CD8-positive, alpha-beta T cell (primary cell): ENCODE measurements at regions of chr18 and their contacts with region 1.

Region 1: GRCh38 chr18:62714671-62715435 is 488 bp upstream of the PHLPP1 start:
- DNase-seq: peak; percentile 78 to 97 (median 92)
- ATAC-seq: peak; percentile 71
- H3K4me3 ChIP-seq: peak overlapping the region; percentile 64 to 71
- H3K4me3 Mint-ChIP-seq: peak overlapping the region; percentile 97
- H3K27ac ChIP-seq: peak overlapping the region; percentile 80 to 89
- H3K27ac Mint-ChIP-seq: peak overlapping the region; percentile 99
- H3K4me1 ChIP-seq: peaks cover 15% of the 10 kb centered on the region
- H3K4me1 Mint-ChIP-seq: peaks cover 37% of the 10 kb centered on the region
- H3K27me3 ChIP-seq: no peaks in the 10 kb centered on the region
- H3K27me3 Mint-ChIP-seq: no peaks in the 10 kb centered on the region
- CTCF ChIP-seq: peak; percentile 77

Region 2: DNA sequence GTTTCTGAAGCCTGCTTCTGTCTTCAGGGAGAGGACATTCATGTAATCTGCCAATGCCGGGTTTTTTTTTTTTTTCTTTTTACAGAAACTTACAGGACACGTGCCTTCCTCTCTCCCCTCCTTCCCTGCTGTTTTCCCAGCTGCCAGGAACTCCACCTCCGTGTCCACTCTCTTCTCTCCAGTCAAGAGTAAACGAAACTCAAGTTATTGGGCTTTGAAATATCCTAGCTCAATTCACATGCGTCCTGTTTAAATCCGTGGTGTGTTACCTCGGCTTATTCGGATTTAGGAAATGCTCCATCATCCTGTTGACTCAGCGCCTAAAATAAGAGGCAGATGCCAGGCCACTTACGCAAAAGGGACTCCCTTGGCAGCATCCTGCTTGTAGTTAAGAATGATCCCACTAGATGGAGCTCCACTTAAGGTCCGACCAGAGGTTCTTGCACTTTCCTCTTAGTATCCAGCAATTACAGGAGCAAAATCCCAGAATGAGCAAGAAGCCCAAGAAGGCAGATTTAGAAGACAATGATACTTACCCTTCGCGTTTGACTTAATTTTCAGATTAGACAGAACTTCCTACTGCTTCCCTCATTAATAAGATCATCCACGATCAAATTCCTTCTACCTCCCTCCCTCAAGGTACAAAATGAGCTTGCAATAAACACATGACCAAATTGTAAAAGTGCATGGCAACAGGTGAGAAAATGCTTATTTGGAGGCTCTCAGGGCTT is 289.2 kb before region 1 on chr18:
- CTCF ChIA-PET with region 1: no interaction called
- POLR2A ChIA-PET with region 1: no interaction called
- intact Hi-C with region 1: loop called in 1 of 2 experiments (anchors 2 kb)
- DNase-seq: peak; percentile 3 to 82 (median 46)
- ATAC-seq: peak; percentile 45
- H3K4me3 ChIP-seq: no peak overlapping the region
- H3K4me3 Mint-ChIP-seq: no peak overlapping the region
- H3K27ac ChIP-seq: no peak overlapping the region
- H3K27ac Mint-ChIP-seq: no peak overlapping the region
- H3K4me1 ChIP-seq: peaks cover 5% of the 10 kb centered on the region
- H3K4me1 Mint-ChIP-seq: peaks cover 17% of the 10 kb centered on the region
- H3K27me3 ChIP-seq: no peaks in the 10 kb centered on the region
- H3K27me3 Mint-ChIP-seq: no peaks in the 10 kb centered on the region
- CTCF ChIP-seq: peak; percentile 87

Region 3: DNA sequence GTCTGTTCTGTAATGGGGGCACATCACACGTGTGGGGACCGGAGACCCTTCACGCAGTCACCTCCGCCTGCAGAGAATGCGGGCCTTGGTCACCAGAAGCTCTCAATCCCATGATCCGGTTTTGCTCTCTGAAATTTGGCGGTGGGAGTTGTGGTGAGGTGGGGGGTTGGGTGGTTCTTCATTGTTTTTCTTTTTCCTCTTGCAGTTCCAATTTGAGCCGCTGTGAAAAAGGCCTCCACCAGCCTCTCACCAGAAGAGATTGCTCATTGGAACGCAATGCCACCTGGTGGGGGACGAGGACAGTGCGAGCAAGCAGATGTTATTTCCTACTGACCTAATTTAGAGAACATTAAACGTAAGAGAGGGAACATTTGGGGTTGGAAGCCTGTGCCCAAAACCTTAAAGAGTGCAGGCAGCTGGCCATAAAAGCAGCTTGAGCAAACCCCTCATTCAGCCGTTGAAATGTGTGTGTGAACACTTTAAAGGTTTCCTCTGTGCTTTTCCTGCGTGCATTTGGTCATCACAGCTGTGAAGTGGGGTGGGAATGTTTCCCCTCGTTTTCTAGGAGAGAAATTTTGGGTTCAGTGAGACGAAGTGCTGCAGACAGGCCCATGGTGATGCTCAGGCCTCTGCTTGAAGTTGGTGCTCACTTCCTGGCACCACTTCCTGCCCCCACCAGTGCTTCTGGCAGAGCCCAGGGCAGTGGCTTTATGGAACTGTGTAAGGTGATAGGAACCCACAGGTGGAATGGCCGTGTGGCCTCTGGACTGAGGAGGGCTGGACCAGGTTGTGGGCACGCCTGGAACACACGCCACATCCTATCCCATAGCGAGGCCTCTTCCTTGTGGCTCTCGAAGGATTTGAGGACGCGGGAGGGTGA is 130.4 kb before region 1 on chr18:
- CTCF ChIA-PET with region 1: interaction called, 4 read pairs
- POLR2A ChIA-PET with region 1: no interaction called
- intact Hi-C with region 1: loop called (anchors 5 kb)
- DNase-seq: peak; percentile 62 to 91 (median 83)
- ATAC-seq: peak; percentile 99
- H3K4me3 ChIP-seq: no peak overlapping the region
- H3K4me3 Mint-ChIP-seq: peak overlapping the region; percentile 33
- H3K27ac ChIP-seq: peak overlapping the region in 1 of 2 experiments; percentile 30
- H3K27ac Mint-ChIP-seq: peak overlapping the region; percentile 39
- H3K4me1 ChIP-seq: peaks cover 16% of the 10 kb centered on the region
- H3K4me1 Mint-ChIP-seq: peaks cover 29% of the 10 kb centered on the region
- H3K27me3 ChIP-seq: no peaks in the 10 kb centered on the region
- H3K27me3 Mint-ChIP-seq: no peaks in the 10 kb centered on the region
- CTCF ChIP-seq: peak; percentile 98

Region 4: GRCh38 chr18:62751341-62751821 is 36.5 kb after region 1 on chr18:
- CTCF ChIA-PET with region 1: no interaction called
- POLR2A ChIA-PET with region 1: no interaction called
- intact Hi-C with region 1: no loop called
- DNase-seq: no peak
- ATAC-seq: no peak
- H3K4me3 ChIP-seq: no peak overlapping the region
- H3K4me3 Mint-ChIP-seq: no peak overlapping the region
- H3K27ac ChIP-seq: no peak overlapping the region
- H3K27ac Mint-ChIP-seq: no peak overlapping the region
- H3K4me1 ChIP-seq: peaks cover 5% of the 10 kb centered on the region
- H3K4me1 Mint-ChIP-seq: peaks cover 19% of the 10 kb centered on the region
- H3K27me3 ChIP-seq: no peaks in the 10 kb centered on the region
- H3K27me3 Mint-ChIP-seq: no peaks in the 10 kb centered on the region
- CTCF ChIP-seq: no peak

Region 5: GRCh38 chr18:62863579-62864001 is 148.7 kb after region 1 on chr18:
- CTCF ChIA-PET with region 1: no interaction called
- POLR2A ChIA-PET with region 1: no interaction called
- intact Hi-C with region 1: loop called in 1 of 2 experiments (anchors 5 kb)
- DNase-seq: no peak
- ATAC-seq: no peak
- H3K4me3 ChIP-seq: no peak overlapping the region
- H3K4me3 Mint-ChIP-seq: no peak overlapping the region
- H3K27ac ChIP-seq: no peak overlapping the region
- H3K27ac Mint-ChIP-seq: no peak overlapping the region
- H3K4me1 ChIP-seq: peaks cover under 1% of the 10 kb centered on the region
- H3K4me1 Mint-ChIP-seq: peaks cover under 1% of the 10 kb centered on the region
- H3K27me3 ChIP-seq: no peaks in the 10 kb centered on the region
- H3K27me3 Mint-ChIP-seq: no peaks in the 10 kb centered on the region
- CTCF ChIP-seq: no peak

Region 6: DNA sequence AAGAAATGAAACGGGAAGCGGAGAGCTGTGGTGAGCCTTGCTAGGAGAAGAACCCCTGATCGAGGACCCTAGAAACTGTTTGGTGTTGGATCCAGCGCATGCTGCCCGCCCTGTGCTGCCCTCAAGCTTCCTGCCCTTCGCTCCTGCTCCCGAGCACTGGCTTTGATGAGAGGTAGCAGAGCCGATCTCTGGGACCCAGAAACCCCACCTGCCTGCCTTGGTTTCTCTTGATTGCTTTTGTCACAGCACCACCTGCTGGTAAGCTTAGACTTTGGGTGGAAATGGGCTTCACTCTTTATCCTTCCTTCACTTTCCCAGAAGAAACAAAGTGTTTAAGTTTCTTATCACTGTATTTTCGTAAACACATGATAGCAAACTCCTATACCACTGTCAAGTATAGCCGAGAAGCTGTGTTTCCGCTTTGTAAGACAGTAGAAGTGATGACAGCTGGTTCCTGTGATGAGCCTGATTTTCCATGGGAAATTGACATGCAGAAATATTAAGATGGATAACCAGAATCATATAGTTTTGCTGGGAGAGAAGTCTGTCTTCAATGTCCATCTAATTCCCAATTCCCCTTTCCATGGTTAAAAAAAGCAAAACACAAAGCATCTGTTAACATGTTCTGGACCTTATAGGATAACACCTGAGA is 267.9 kb after region 1 on chr18:
- CTCF ChIA-PET with region 1: interaction called, 50 read pairs
- POLR2A ChIA-PET with region 1: interaction called, 10 read pairs
- intact Hi-C with region 1: loop called (anchors 1 kb)
- DNase-seq: peak; percentile 25 to 77 (median 57)
- ATAC-seq: peak; percentile 65
- H3K4me3 ChIP-seq: no peak overlapping the region
- H3K4me3 Mint-ChIP-seq: peak overlapping the region; percentile 62
- H3K27ac ChIP-seq: no peak overlapping the region
- H3K27ac Mint-ChIP-seq: no peak overlapping the region
- H3K4me1 ChIP-seq: no peaks in the 10 kb centered on the region
- H3K4me1 Mint-ChIP-seq: peaks cover 6% of the 10 kb centered on the region
- H3K27me3 ChIP-seq: no peaks in the 10 kb centered on the region
- H3K27me3 Mint-ChIP-seq: no peaks in the 10 kb centered on the region
- CTCF ChIP-seq: peak; percentile 70

Region 7: DNA sequence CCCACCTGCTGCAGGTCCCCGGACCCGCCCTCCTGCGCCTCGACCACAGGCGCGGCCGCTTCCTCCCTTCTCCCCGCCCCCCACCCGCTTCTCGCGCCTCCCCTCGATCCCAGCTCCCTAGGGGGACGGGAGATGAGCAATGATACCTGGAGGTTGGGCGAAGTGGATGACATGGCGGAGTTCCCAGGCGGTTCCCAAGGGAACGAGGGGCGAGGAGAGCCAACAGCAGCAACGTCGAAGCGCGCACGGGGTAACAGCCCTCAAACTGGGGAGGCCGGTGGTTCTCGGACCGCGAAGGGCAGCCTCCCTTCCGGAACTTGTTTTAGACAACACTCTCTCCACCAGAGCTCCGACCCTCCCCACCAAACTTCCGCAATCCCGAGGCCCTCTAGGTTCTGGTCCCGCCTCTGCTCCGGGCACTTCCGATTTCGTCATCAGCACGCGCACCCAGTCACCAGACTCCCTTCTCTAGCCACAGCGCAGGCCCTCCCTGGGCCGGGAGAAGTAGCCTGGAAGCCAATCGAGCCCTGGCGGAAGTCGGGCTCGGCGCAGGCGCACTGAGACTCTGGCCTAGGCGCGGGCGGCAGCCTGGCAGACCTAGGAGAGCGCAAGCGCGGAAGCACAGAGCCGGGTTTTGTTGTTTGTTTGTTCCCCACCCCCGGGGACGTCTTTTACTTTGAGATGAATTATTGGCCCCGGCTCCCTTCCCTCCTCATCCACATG is 707.4 kb after region 1 on chr18 and contains the start of gene VPS4B:
- CTCF ChIA-PET with region 1: no interaction called
- POLR2A ChIA-PET with region 1: interaction called, 7 read pairs
- intact Hi-C with region 1: loop called (anchors 1 to 2 kb)
- DNase-seq: peak; percentile 99 to 100 (median 99)
- ATAC-seq: peak; percentile 91
- H3K4me3 ChIP-seq: peak within 1 kb of the TSS; percentile 87 to 96
- H3K4me3 Mint-ChIP-seq: peak within 1 kb of the TSS; percentile 97
- H3K27ac ChIP-seq: peak within 1 kb of the TSS; percentile 94 to 97
- H3K27ac Mint-ChIP-seq: peak within 1 kb of the TSS; percentile 97
- H3K4me1 ChIP-seq: peaks cover 32% of the 10 kb centered on the region
- H3K4me1 Mint-ChIP-seq: peaks cover 30% of the 10 kb centered on the region
- H3K27me3 ChIP-seq: no peaks in the 10 kb centered on the region
- H3K27me3 Mint-ChIP-seq: no peaks in the 10 kb centered on the region
- CTCF ChIP-seq: no peak
- total RNA-seq, gene VPS4B: 58.5 to 76.2 TPM

Region 8: DNA sequence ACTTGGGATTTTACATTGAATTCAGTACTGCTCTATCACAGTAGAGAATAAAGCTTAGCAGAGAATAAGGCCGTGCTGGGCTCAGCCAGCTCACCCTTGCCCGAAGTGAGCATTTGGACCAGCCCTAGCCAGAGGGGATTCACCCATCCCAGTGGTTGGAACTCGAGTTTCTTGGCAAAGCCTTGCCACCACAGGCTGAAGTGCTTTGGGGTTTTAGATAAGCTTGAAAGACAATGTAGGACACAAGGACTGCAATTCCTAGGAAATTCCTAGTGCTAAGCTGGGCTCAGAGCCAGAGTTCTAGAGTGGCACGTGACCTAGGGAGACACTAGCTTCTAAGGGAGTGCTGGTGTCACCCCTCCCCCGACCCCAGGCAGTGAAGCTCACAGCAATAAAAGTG is 1015.9 kb after region 1 on chr18:
- CTCF ChIA-PET with region 1: no interaction called
- POLR2A ChIA-PET with region 1: no interaction called
- intact Hi-C with region 1: no loop called
- DNase-seq: no peak
- ATAC-seq: no peak
- H3K4me3 ChIP-seq: no peak overlapping the region
- H3K4me3 Mint-ChIP-seq: no peak overlapping the region
- H3K27ac ChIP-seq: no peak overlapping the region
- H3K27ac Mint-ChIP-seq: no peak overlapping the region
- H3K4me1 ChIP-seq: no peaks in the 10 kb centered on the region
- H3K4me1 Mint-ChIP-seq: no peaks in the 10 kb centered on the region
- H3K27me3 ChIP-seq: no peaks in the 10 kb centered on the region
- H3K27me3 Mint-ChIP-seq: peaks cover 1% of the 10 kb centered on the region
- CTCF ChIP-seq: no peak

Region 9: GRCh38 chr18:64185987-64186386 is 1471.1 kb after region 1 on chr18:
- CTCF ChIA-PET with region 1: no interaction called
- POLR2A ChIA-PET with region 1: no interaction called
- intact Hi-C with region 1: no loop called
- DNase-seq: no peak
- ATAC-seq: no peak
- H3K4me3 ChIP-seq: no peak overlapping the region
- H3K4me3 Mint-ChIP-seq: no peak overlapping the region
- H3K27ac ChIP-seq: no peak overlapping the region
- H3K27ac Mint-ChIP-seq: no peak overlapping the region
- H3K4me1 ChIP-seq: no peaks in the 10 kb centered on the region
- H3K4me1 Mint-ChIP-seq: no peaks in the 10 kb centered on the region
- H3K27me3 ChIP-seq: no peaks in the 10 kb centered on the region
- H3K27me3 Mint-ChIP-seq: no peaks in the 10 kb centered on the region
- CTCF ChIP-seq: no peak